Mammary epithelial cell (primary cell): ENCODE measurements at regions of chr15 and their contacts with region 1.

Region 1: GRCh38 chr15:38474155-38474757 is 20.3 kb downstream of the FAM98B start:
- DNase-seq: peak; percentile 62
- H3K4me3 ChIP-seq: no peak overlapping the region
- H3K27ac ChIP-seq: no peak overlapping the region
- H3K4me1 ChIP-seq: no peaks in the 10 kb centered on the region
- H3K27me3 ChIP-seq: no peaks in the 10 kb centered on the region
- CTCF ChIP-seq: peak; percentile 68 to 78

Region 2: DNA sequence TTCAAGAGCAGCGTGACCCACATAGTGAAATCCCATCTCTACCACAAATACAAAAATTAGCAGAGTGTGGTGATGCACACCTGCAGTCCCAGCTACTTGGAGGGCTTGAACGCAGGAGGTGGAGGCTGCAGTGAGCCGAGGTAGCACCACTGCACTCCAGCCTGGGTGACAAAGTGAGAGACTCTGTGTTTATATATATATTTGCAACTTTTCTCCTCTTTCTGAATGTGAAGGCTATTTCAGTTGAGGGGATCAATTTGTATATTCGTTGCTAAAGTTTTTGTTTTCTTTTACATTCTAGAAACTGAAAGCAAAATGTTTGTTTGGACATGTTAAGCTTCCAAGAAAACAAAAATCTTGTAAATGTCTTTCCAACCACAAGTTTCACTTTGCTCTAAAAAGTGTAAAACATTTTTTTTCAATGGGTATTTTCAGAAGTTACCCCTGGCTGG is 50.1 kb before region 1 on chr15:
- CTCF ChIA-PET with region 1: no interaction called
- dilution Hi-C with region 1: no loop called
- in situ Hi-C with region 1: no loop called
- intact Hi-C with region 1: no loop called
- DNase-seq: no peak
- H3K4me3 ChIP-seq: no peak overlapping the region
- H3K27ac ChIP-seq: no peak overlapping the region
- H3K4me1 ChIP-seq: no peaks in the 10 kb centered on the region
- H3K27me3 ChIP-seq: peaks cover 5% of the 10 kb centered on the region
- CTCF ChIP-seq: no peak

Region 3: DNA sequence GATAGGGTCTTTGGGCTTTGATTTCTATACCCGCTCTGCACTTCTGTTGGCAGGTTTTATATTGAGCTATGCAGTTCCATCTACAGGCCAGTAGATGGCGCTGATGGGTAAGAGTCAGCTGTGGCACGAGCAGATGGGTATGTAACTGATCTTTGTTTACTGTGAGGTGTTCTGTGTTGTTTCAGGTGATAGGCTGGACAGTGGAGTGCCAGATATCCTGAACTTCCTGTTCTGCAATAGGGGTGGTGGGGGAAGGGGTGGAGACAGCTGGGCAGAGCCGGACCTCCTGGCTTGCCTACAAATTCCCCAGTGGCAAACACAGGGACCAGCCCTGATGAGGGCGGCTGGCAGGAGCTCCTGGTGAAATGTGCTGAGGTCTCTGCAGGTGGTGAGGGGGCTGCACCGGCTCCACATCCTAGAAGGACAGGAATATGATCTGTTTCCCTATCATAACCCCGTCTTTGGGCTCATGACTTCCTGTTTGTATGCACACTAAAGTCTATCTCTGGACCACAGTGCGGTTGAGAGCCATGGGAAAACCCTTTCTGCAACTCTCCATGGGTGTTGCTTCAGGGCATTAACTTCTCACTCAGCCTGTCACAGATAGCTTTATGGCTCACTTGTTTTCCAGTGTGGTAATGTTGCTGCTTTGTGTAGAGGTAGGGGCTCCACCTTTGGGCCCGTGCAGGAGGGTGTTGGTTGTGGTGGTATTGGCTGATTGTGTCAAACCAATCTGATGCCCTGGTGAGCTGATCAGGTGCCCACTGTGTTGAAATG is 33.7 kb before region 1 on chr15:
- CTCF ChIA-PET with region 1: no interaction called
- dilution Hi-C with region 1: no loop called
- in situ Hi-C with region 1: no loop called
- intact Hi-C with region 1: loop called (anchors 1 kb)
- DNase-seq: peak; percentile 46
- H3K4me3 ChIP-seq: no peak overlapping the region
- H3K27ac ChIP-seq: no peak overlapping the region
- H3K4me1 ChIP-seq: no peaks in the 10 kb centered on the region
- H3K27me3 ChIP-seq: no peaks in the 10 kb centered on the region
- CTCF ChIP-seq: peak; percentile 93 to 95

Region 4: GRCh38 chr15:38563723-38564519 is 89.7 kb after region 1 on chr15:
- CTCF ChIA-PET with region 1: interaction called, 4 read pairs
- dilution Hi-C with region 1: no loop called
- in situ Hi-C with region 1: no loop called
- intact Hi-C with region 1: loop called (anchors 1 kb)
- DNase-seq: peak; percentile 39
- H3K4me3 ChIP-seq: peak overlapping the region; percentile 34 to 54 (median 54)
- H3K27ac ChIP-seq: no peak overlapping the region
- H3K4me1 ChIP-seq: peaks cover 3% of the 10 kb centered on the region
- H3K27me3 ChIP-seq: peaks cover 4% of the 10 kb centered on the region
- CTCF ChIP-seq: peak; percentile 49 to 95

Region 5: GRCh38 chr15:38647683-38648082 is 173.4 kb after region 1 on chr15:
- CTCF ChIA-PET with region 1: no interaction called
- dilution Hi-C with region 1: no loop called
- in situ Hi-C with region 1: no loop called
- intact Hi-C with region 1: loop called (anchors 1 kb)
- DNase-seq: peak; percentile 56
- H3K4me3 ChIP-seq: peak overlapping the region in 1 of 3 experiments; percentile 15
- H3K27ac ChIP-seq: peak overlapping the region; percentile 5
- H3K4me1 ChIP-seq: peaks cover 28% of the 10 kb centered on the region
- H3K27me3 ChIP-seq: no peaks in the 10 kb centered on the region
- CTCF ChIP-seq: peak; percentile 72 to 74

Region 6: DNA sequence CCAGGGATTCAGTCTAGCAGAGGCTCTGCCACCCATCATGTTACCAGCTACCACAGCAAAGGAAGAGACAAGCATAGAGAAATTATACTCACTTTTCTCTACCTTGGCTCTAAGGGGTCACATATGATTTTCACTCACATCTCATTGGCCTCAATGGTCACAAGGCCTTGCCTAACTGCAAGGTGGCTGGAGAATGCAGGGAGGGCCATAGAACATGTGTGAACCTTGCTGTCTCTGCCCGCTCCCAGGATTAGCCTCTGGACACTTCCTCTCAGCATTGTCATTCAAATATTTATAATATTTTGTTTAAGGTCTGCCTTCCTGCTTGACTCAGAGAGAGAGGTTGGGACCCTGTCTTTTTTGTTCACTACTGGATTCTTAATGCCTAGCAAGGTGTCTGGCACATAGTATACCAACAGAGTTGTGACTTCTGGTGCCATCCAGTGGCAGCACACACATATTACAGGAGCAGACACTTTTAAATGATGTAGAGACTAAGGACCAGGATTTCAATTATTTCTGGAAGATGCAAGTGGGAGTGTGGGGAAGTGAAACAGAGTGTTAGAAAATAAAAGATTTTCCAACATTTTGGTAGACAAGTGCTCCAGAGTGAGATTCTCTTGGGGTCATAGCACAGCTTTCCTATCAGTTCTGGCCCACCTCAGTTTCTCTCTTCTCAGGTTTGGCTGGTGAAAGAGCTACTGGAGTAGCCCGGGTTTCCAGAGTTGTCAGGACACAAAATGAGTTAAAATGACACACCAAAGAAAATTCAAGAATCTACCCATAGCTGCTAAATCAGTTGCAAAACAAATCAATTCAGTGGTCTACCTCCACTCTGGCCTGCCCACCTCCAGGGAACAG is 209.4 kb after region 1 on chr15:
- CTCF ChIA-PET with region 1: no interaction called
- dilution Hi-C with region 1: no loop called
- in situ Hi-C with region 1: no loop called
- intact Hi-C with region 1: loop called (anchors 1 kb)
- DNase-seq: peak; percentile 32
- H3K4me3 ChIP-seq: no peak overlapping the region
- H3K27ac ChIP-seq: no peak overlapping the region
- H3K4me1 ChIP-seq: peaks cover 4% of the 10 kb centered on the region
- H3K27me3 ChIP-seq: no peaks in the 10 kb centered on the region
- CTCF ChIP-seq: peak; percentile 86 to 89

Region 7: GRCh38 chr15:38699633-38700230 is 225.5 kb after region 1 on chr15:
- CTCF ChIA-PET with region 1: interaction called, 3 read pairs
- dilution Hi-C with region 1: no loop called
- in situ Hi-C with region 1: no loop called
- intact Hi-C with region 1: loop called (anchors 1 kb)
- DNase-seq: peak; percentile 45
- H3K4me3 ChIP-seq: no peak overlapping the region
- H3K27ac ChIP-seq: no peak overlapping the region
- H3K4me1 ChIP-seq: peaks cover 6% of the 10 kb centered on the region
- H3K27me3 ChIP-seq: no peaks in the 10 kb centered on the region
- CTCF ChIP-seq: peak; percentile 91 to 94